A673 (cell line): ENCODE measurements at regions of chr9 and their contacts with region 1.

Region 1: GRCh38 chr9:120619751-120620655 is 40.0 kb upstream of the CDK5RAP2 start:
- DNase-seq: peak; percentile 76
- H3K4me3 ChIP-seq: no peak overlapping the region
- H3K27ac ChIP-seq: no peak overlapping the region
- H3K4me1 ChIP-seq: peaks cover 6% of the 10 kb centered on the region
- H3K27me3 ChIP-seq: no peaks in the 10 kb centered on the region
- CTCF ChIP-seq: peak; percentile 91

Region 2: GRCh38 chr9:120714088-120714845 is 94.3 kb after region 1 on chr9 and contains the start of gene MEGF9:
- CTCF ChIA-PET with region 1: interaction called, 3 read pairs
- POLR2A ChIA-PET with region 1: no interaction called
- intact Hi-C with region 1: loop called (anchors 5 kb)
- DNase-seq: peak; percentile 99
- H3K4me3 ChIP-seq: peak within 1 kb of the TSS; percentile 78
- H3K27ac ChIP-seq: peak within 1 kb of the TSS; percentile 90
- H3K4me1 ChIP-seq: peaks cover 41% of the 10 kb centered on the region
- H3K27me3 ChIP-seq: no peaks in the 10 kb centered on the region
- CTCF ChIP-seq: no peak
- total RNA-seq, gene MEGF9: 11.5 and 12.2 TPM in 2 replicates

Region 3: DNA sequence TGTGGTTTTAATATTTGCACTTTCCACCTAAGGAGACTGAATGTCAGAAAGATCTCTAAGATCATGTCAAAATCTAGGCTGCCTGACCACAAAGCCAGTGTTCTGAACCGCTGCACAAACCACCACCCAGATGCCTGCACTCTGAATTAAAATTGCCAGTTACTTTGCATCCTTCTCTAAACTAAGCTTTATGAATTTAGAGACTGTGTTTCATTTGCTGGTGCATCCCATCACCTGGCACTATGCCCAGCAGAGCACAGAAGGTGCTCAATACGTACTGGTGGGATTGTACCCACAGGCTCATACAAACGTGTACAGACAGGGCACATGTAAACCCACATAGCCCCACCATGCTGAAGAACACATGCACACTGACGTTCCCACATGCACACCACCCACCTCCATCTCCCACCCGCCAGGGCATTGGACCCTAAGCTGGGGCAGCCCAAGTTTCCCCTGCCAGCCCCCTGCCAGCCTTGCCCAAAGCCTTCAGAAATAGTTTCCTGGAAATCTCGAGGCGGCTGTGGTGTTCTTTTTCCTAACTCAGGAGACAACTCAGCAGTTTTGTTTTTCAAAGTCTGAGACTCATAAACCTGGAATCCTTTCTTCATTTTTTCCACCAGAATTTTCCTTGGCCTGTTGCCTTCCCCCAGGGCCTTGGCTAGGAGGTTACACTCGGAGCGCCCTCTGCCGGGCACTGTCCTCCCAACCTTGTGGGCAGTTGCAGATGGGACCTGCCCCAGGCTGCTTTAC is 316.2 kb after region 1 on chr9:
- CTCF ChIA-PET with region 1: interaction called, 3 read pairs
- POLR2A ChIA-PET with region 1: no interaction called
- intact Hi-C with region 1: loop called (anchors 5 kb)
- DNase-seq: peak; percentile 89
- H3K4me3 ChIP-seq: no peak overlapping the region
- H3K27ac ChIP-seq: peak overlapping the region; percentile 51
- H3K4me1 ChIP-seq: peaks cover 36% of the 10 kb centered on the region
- H3K27me3 ChIP-seq: no peaks in the 10 kb centered on the region
- CTCF ChIP-seq: peak; percentile 96

Region 4: GRCh38 chr9:121074635-121075385 is 454.8 kb after region 1 on chr9 and contains the start of gene CNTRL:
- CTCF ChIA-PET with region 1: no interaction called
- POLR2A ChIA-PET with region 1: no interaction called
- intact Hi-C with region 1: loop called (anchors 10 kb)
- DNase-seq: peak; percentile 96
- H3K4me3 ChIP-seq: peak within 1 kb of the TSS; percentile 61
- H3K27ac ChIP-seq: peak within 1 kb of the TSS; percentile 89
- H3K4me1 ChIP-seq: peaks cover 28% of the 10 kb centered on the region
- H3K27me3 ChIP-seq: no peaks in the 10 kb centered on the region
- CTCF ChIP-seq: no peak
- total RNA-seq, gene CNTRL: 26.3 and 30.0 TPM in 2 replicates